GM12878 (cell line): ENCODE measurements at regions of chr20 and their contacts with region 1.

Region 1: GRCh38 chr20:32779500-32780211 is 17.5 kb downstream of the DNMT3B start:
- DNase-seq: no peak
- ATAC-seq: no peak
- H3K4me3 ChIP-seq: no peak overlapping the region
- H3K27ac ChIP-seq: no peak overlapping the region
- H3K4me1 ChIP-seq: no peaks in the 10 kb centered on the region
- H3K27me3 ChIP-seq: no peaks in the 10 kb centered on the region
- CTCF ChIP-seq: no peak
- EP300 ChIP-seq: no peak
- POLR2A ChIP-seq: no peak
- RAD21 ChIP-seq: no peak

Region 2: DNA sequence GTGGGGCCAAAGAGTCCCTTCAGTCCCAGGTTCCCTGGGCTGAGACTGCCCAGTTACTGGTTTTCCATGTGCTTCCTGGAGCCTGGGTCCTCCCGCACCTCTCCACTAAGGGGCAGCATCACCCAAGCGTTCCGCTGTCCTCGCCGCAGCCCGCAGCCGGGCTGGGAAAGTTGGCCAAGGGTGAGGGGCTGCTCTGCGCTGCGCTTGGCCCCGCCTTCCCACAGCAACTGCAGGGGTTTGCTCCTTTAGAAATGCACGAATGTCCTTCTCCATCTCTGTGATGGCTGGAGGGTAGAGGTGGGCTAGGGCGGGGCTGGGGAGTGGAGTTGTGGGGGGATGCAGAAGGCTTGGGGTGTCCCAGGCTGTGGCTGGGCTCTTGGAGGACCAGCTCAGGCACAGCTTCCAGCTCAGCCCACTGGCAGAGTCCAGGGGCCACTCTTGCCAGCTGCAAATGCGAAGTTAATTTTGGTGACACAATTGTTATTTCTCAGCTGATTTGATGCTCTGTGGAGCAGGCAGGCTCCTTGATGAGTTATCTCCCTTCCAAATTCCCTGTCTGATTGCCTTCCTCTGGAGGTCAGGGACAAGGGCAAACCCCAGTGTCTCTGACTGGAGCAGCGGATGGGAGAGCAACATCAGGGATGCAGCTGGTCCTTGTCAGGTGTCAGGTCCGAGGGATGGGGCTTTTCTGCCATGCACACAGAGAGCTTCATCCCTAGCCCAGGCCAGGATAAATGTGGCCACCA is 257.7 kb before region 1 on chr20:
- CTCF ChIA-PET with region 1: interaction called, 38 read pairs
- POLR2A ChIA-PET with region 1: no interaction called
- RAD21 ChIA-PET with region 1: interaction called, 20 read pairs
- SMC1A ChIA-PET with region 1: interaction called, 12 read pairs
- in situ Hi-C with region 1: no loop called
- intact Hi-C with region 1: loop called (anchors 5 kb)
- DNase-seq: no peak
- ATAC-seq: peak; percentile 87
- H3K4me3 ChIP-seq: no peak overlapping the region
- H3K27ac ChIP-seq: no peak overlapping the region
- H3K4me1 ChIP-seq: peaks cover 20% of the 10 kb centered on the region
- H3K27me3 ChIP-seq: no peaks in the 10 kb centered on the region
- CTCF ChIP-seq: peak; percentile 83 to 93 (median 83)
- EP300 ChIP-seq: no peak
- POLR2A ChIP-seq: no peak
- RAD21 ChIP-seq: peak; percentile 97

Region 3: DNA sequence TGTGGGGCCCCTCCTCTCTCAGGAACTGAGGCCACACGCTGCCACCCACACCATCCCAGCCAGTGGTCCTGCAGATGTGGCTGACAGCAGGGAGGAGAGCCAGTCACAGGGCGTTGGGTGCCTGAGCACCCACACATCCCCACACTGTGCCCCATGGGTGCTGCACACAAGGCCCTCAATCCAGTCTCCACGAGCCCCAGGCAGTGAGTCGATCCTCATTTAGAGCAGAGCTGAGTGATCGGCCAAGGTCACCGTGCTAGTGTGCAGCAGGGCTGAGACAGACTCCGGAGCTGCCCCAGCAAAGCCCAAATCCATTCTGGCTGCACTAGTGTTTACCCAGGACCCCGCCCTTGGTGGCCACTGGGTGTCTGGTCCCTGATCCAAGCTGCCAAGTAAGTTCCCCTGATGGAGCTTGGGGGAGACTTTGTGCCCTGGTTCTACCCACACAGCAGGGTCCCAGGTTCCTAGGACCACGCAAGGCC is 114.9 kb before region 1 on chr20:
- CTCF ChIA-PET with region 1: interaction called, 17 read pairs
- POLR2A ChIA-PET with region 1: no interaction called
- RAD21 ChIA-PET with region 1: no interaction called
- SMC1A ChIA-PET with region 1: interaction called, 3 read pairs
- in situ Hi-C with region 1: no loop called
- intact Hi-C with region 1: no loop called
- DNase-seq: no peak
- ATAC-seq: peak; percentile 40
- H3K4me3 ChIP-seq: no peak overlapping the region
- H3K27ac ChIP-seq: no peak overlapping the region
- H3K4me1 ChIP-seq: peaks cover 8% of the 10 kb centered on the region
- H3K27me3 ChIP-seq: no peaks in the 10 kb centered on the region
- CTCF ChIP-seq: no peak
- EP300 ChIP-seq: no peak
- POLR2A ChIP-seq: no peak
- RAD21 ChIP-seq: no peak

Region 4: GRCh38 chr20:32674362-32674789 is 105.3 kb before region 1 on chr20:
- CTCF ChIA-PET with region 1: interaction called, 295 read pairs
- POLR2A ChIA-PET with region 1: interaction called, 12 read pairs
- RAD21 ChIA-PET with region 1: interaction called, 138 read pairs
- SMC1A ChIA-PET with region 1: interaction called, 107 read pairs
- in situ Hi-C with region 1: loop called (anchors 5 kb)
- intact Hi-C with region 1: loop called (anchors 1 kb)
- DNase-seq: no peak
- ATAC-seq: peak; percentile 69
- H3K4me3 ChIP-seq: no peak overlapping the region
- H3K27ac ChIP-seq: no peak overlapping the region
- H3K4me1 ChIP-seq: peaks cover 38% of the 10 kb centered on the region
- H3K27me3 ChIP-seq: no peaks in the 10 kb centered on the region
- CTCF ChIP-seq: peak; percentile 74 to 86 (median 85)
- EP300 ChIP-seq: no peak
- POLR2A ChIP-seq: no peak
- RAD21 ChIP-seq: peak; percentile 94

Region 5: GRCh38 chr20:32681175-32682084 is 98.2 kb before region 1 on chr20:
- CTCF ChIA-PET with region 1: interaction called, 295 read pairs
- POLR2A ChIA-PET with region 1: no interaction called
- RAD21 ChIA-PET with region 1: interaction called, 12 read pairs
- SMC1A ChIA-PET with region 1: interaction called, 107 read pairs
- in situ Hi-C with region 1: no loop called
- intact Hi-C with region 1: no loop called
- DNase-seq: no peak
- ATAC-seq: peak; percentile 69
- H3K4me3 ChIP-seq: no peak overlapping the region
- H3K27ac ChIP-seq: no peak overlapping the region
- H3K4me1 ChIP-seq: 0 out of 2 replicates have a peak, but pooled peaks cover 6% of the 10 kb centered on the region
- H3K27me3 ChIP-seq: no peaks in the 10 kb centered on the region
- CTCF ChIP-seq: no peak
- EP300 ChIP-seq: no peak
- POLR2A ChIP-seq: no peak
- RAD21 ChIP-seq: no peak

Region 6: DNA sequence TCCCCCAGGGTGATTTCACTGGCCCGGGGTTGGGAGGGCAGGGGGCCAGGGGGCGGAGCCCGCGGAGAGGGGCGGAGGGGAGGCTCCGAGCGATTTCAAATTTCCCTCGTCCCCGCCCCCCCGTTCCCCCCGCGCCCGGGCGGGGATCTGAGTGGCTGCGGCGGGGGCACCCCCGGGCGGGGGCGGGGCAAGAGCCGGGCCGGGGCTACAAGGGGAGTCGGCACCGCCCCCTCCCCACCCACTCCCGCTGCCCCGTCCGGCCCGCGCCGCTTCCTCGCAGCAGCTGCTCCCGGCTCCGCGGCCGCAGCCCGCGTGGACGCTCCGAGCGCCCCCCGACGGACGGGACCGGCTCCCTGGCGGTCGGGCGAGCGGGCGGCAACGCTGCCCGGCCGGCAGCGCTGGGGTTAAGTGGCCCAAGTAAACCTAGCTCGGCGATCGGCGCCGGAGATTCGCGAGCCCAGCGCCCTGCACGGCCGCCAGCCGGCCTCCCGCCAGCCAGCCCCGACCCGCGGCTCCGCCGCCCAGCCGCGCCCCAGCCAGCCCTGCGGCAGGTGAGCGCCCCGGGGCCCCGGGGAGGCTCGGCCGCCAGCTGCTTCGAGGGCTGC is 17.4 kb before region 1 on chr20 and contains the start of gene DNMT3B:
- CTCF ChIA-PET with region 1: interaction called, 15 read pairs
- POLR2A ChIA-PET with region 1: no interaction called
- RAD21 ChIA-PET with region 1: no interaction called
- SMC1A ChIA-PET with region 1: no interaction called
- in situ Hi-C with region 1: no loop called
- intact Hi-C with region 1: no loop called
- DNase-seq: no peak
- ATAC-seq: peak; percentile 90
- H3K4me3 ChIP-seq: peak within 1 kb of the TSS; percentile 76
- H3K27ac ChIP-seq: no peak within 1 kb of the TSS
- H3K4me1 ChIP-seq: peaks cover 8% of the 10 kb centered on the region
- H3K27me3 ChIP-seq: no peaks in the 10 kb centered on the region; a peak in 2 of 4 replicates
- CTCF ChIP-seq: 0 out of 6 replicates have a peak, but pooled peaks of 1 of the 3 experiments have one; percentile 1
- EP300 ChIP-seq: no peak
- POLR2A ChIP-seq: peak; percentile 60
- RAD21 ChIP-seq: no peak
- polyA plus RNA-seq, gene DNMT3B: 0.23 to 0.33 TPM